ENCODE measurements at regions of chr1 and their contacts with region 1.

Region 1: GRCh38 chr1:34786521-34787325 is 5.7 kb downstream of the GJB3 start:
- DNase-seq: peak; percentile 55 to 61
- H3K4me3 ChIP-seq: no peak overlapping the region
- H3K27ac ChIP-seq: no peak overlapping the region
- H3K4me1 ChIP-seq: peaks cover 24% of the 10 kb centered on the region
- H3K27me3 ChIP-seq: no peaks in the 10 kb centered on the region
- CTCF ChIP-seq: peak; percentile 82

Region 2: DNA sequence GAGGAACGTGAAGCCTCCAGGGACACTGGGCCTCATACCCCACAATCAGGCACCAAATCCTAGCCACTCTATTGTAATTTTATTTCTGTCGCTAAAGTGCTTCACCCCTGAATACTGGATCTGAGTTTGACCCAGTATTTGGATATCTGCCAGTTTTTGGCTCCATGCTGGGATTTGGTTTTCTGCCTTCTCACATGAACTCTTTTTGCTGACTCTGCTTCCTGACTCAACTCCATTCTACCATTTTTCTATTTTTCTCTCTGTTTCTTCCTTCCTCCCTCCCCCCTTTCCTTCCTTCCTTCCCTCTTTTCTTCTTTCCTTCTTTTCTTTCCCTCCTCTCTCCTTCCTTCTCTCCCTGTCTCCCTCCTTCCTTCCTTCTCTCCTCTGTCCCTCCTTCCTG is 183.1 kb before region 1 on chr1:
- CTCF ChIA-PET with region 1: no interaction called
- POLR2A ChIA-PET with region 1: no interaction called
- intact Hi-C with region 1: no loop called
- DNase-seq: no peak
- H3K4me3 ChIP-seq: no peak overlapping the region
- H3K27ac ChIP-seq: no peak overlapping the region
- H3K4me1 ChIP-seq: no peaks in the 10 kb centered on the region
- H3K27me3 ChIP-seq: peaks cover 44% of the 10 kb centered on the region
- CTCF ChIP-seq: no peak

Region 3: GRCh38 chr1:34865981-34866761 is 79.4 kb after region 1 on chr1:
- CTCF ChIA-PET with region 1: interaction called, 3 read pairs
- POLR2A ChIA-PET with region 1: no interaction called
- intact Hi-C with region 1: loop called (anchors 5 kb)
- DNase-seq: peak in 1 of 2 experiments; percentile 78
- H3K4me3 ChIP-seq: peak overlapping the region; percentile 51; the same call in 1 of the 2 replicates
- H3K27ac ChIP-seq: no peak overlapping the region
- H3K4me1 ChIP-seq: no peaks in the 10 kb centered on the region
- H3K27me3 ChIP-seq: peaks cover 33% of the 10 kb centered on the region
- CTCF ChIP-seq: peak; percentile 96

Measured in PC-9 (cell line).